SK-N-SH (cell line): ENCODE measurements at regions of chr1 and their contacts with region 1.

Region 1: DNA sequence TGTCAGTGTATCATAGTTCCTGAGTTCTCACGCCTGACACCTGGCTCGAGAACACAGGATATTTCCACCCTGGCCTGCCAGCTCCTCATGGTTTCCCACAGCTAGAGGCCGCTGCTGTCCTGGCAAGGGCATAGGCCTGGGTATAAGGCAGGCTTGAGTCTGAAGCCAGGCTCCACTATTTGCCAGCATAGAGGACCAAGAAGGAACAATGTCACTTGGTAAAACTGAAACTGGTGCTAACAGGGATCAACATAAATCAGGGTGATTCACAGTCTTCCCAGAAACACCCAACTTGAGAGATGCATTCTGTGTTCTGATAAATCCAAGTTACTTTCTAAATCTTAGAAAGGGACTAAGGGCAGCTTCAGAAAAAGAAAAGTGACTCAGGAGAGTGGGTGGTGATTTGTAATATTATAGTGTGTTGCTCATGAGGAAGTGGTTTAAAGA is 6.9 kb upstream of the S100A2 start:
- DNase-seq: peak; percentile 78
- H3K4me3 ChIP-seq: no peak overlapping the region
- H3K27ac ChIP-seq: peak overlapping the region; percentile 4 to 77; a peak in 3 of 4 replicates
- H3K4me1 ChIP-seq: peaks cover 12 to 15% of the 10 kb centered on the region in 2 experiments
- H3K27me3 ChIP-seq: no peaks in the 10 kb centered on the region
- CTCF ChIP-seq: peak; percentile 96
- EP300 ChIP-seq: no peak
- RAD21 ChIP-seq: peak; percentile 91

Region 2: DNA sequence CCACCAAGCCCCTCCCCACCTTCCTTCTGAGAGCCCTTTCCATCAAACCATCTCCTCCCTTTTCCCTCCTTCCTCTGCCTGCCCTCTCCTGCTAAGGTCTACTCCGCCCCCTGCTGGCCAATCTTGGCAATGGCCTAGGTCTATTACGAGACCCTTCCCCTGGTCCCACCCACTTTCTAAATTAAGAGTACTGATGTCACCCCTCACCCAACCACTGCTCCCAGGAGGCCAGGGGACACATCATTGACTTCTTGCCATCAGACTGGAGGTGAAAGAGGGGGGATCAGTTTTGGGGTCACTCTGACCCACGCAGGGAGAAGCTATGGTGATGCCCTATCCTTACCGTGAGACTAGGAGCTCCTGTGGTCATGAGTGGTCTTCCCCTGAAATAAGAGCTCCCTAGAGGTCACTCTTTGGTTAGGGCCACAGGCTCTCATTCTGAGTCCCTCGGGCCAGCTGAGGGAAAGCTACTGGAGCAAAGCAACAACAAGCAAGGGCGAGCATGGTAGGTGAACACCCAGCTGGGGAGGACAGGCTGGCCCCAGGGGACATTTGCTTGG is 77.5 kb before region 1 on chr1:
- CTCF ChIA-PET with region 1: interaction called, 34 read pairs
- POLR2A ChIA-PET with region 1: no interaction called
- DNase-seq: peak; percentile 79
- H3K4me3 ChIP-seq: no peak overlapping the region; a peak in 1 of 4 replicates
- H3K27ac ChIP-seq: no peak overlapping the region
- H3K4me1 ChIP-seq: peaks cover 0 to 5% of the 10 kb centered on the region in 2 experiments; a peak in 1 of 4 replicates
- H3K27me3 ChIP-seq: peaks cover 10% of the 10 kb centered on the region; the same call in 1 of the 2 replicates
- CTCF ChIP-seq: peak; percentile 96
- EP300 ChIP-seq: no peak
- RAD21 ChIP-seq: peak; percentile 88

Region 3: DNA sequence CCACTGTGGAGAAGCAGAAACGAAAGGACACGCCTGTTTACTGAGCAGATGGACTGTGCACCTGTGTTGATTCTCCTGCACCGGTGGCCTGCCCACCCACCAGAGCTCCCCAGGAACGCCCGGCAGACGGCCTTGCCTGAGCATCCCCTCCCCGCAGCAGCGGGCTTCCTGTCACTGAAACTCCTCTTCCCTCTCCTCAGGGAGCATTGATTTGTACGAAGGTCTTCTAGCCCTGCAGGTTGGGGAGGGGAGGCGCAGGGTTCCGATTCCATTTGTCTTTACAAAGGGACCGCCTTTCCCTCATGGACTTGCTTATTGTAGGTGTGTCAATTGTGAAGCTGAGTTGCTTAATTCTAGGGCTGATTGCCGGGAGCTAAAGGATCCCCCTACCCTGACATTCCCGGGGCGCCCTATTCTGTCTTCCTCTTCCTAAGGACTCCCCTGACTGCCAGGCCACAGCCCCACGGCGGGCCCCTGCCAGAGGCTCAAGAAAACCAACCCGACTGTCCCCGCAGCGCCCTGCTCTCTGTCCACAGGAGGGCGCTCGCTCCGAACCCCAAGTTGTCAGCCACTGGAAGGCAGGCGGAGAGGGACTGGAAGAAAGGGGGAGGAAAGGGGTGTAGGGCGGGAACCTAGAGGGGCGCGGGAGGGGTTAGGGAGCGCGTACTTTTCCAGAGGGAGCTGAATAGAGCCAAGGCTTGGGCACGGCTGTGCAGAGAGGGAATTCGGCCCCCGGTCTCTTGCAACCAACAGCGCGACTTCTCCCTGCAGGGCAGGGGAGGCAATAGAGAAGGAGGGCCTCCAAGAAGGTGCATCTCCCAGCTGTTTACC is 39.6 kb before region 1 on chr1:
- CTCF ChIA-PET with region 1: interaction called, 24 read pairs
- POLR2A ChIA-PET with region 1: no interaction called
- DNase-seq: no peak
- H3K4me3 ChIP-seq: peak overlapping the region in 1 of 2 experiments; percentile 79; a peak in 3 of 4 replicates
- H3K27ac ChIP-seq: peak overlapping the region; percentile 1 to 87; a peak in 3 of 4 replicates
- H3K4me1 ChIP-seq: peaks cover 24 to 31% of the 10 kb centered on the region in 2 experiments; a peak in 3 of 4 replicates
- H3K27me3 ChIP-seq: no peaks in the 10 kb centered on the region
- CTCF ChIP-seq: peak; percentile 62
- EP300 ChIP-seq: no peak
- RAD21 ChIP-seq: 0 out of 2 replicates have a peak, but pooled peaks have one; percentile 9

Region 4: DNA sequence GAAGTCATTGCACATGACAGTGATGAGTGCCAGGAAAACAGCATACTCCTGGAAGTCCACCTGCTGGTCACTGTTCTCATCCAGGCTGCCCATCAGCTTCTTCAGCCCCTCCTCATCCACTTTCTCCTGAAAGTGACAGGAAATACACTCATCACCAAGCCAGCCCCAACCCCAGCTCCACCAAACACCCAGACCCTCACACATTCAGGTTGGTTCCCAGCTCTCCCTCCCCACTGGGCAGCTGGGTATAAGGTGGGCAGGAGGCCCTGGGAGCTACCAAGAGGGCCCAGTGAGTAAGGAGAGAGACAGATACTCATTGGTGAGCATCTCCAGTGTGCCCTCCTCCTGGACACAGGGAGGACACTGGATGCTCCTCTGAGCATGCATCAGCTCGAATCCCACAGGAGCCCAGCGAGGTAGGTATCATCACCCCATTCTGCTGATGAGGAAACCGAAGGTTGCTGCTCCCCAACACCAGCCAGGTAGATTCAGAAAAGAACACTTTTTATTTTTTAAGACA is 11.1 kb before region 1 on chr1:
- CTCF ChIA-PET with region 1: interaction called, 26 read pairs
- POLR2A ChIA-PET with region 1: no interaction called
- DNase-seq: no peak
- H3K4me3 ChIP-seq: no peak overlapping the region
- H3K27ac ChIP-seq: no peak overlapping the region
- H3K4me1 ChIP-seq: peaks cover 15 to 27% of the 10 kb centered on the region in 2 experiments
- H3K27me3 ChIP-seq: no peaks in the 10 kb centered on the region
- CTCF ChIP-seq: no peak
- EP300 ChIP-seq: no peak
- RAD21 ChIP-seq: no peak

Region 5: GRCh38 chr1:153617675-153618074 is 45.1 kb after region 1 on chr1:
- CTCF ChIA-PET with region 1: interaction called, 100 read pairs
- POLR2A ChIA-PET with region 1: no interaction called
- DNase-seq: peak; percentile 82
- H3K4me3 ChIP-seq: no peak overlapping the region
- H3K27ac ChIP-seq: no peak overlapping the region
- H3K4me1 ChIP-seq: peaks cover 0 to 4% of the 10 kb centered on the region in 2 experiments; a peak in 1 of 4 replicates
- H3K27me3 ChIP-seq: no peaks in the 10 kb centered on the region
- CTCF ChIP-seq: peak; percentile 81
- EP300 ChIP-seq: no peak
- RAD21 ChIP-seq: peak; percentile 64

Region 6: DNA sequence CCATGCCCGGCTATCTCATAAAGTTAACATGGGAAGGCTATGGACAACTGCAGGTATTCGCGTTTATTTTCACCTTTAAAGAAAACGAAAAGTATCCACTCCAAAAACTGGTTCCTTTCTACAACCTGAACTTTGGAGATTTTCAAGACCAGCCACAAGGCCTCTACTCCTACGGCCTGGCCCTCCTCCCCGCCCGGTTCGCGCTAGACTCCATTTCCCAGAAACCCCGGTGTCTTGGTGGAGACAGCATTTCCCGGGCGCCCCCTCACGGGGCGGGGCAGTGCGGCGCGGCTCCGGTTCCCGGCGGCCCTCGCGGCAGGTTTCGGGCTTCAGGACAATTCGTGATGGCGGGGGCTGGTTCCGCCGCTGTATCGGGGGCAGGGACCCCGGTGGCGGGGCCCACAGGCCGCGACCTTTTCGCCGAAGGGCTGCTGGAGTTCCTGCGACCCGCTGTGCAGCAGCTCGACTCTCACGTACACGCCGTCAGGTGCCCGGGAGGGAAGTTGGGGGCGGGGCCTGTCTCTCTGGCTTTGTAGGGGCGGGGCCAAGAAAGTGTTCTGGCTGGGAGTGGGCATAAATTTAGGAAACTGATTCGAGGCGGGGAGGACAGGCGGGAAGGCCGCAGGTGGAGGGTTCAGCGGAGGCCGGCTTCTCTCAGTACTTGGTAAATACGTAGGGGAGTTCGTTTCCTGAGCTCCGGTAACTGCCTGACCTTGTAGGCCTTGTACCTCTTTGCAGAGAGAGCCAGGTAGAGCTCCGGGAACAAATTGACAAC is 86.0 kb after region 1 on chr1 and contains the start of gene SNAPIN:
- CTCF ChIA-PET with region 1: no interaction called
- POLR2A ChIA-PET with region 1: no interaction called
- DNase-seq: peak; percentile 94
- H3K4me3 ChIP-seq: peak within 1 kb of the TSS; percentile 60 to 92
- H3K27ac ChIP-seq: peak within 1 kb of the TSS; percentile 58 to 83; a peak in 3 of 4 replicates
- H3K4me1 ChIP-seq: peaks cover 0 to 5% of the 10 kb centered on the region in 2 experiments; a peak in 1 of 4 replicates
- H3K27me3 ChIP-seq: no peaks in the 10 kb centered on the region
- CTCF ChIP-seq: 0 out of 2 replicates have a peak, but pooled peaks have one; percentile 12
- EP300 ChIP-seq: no peak
- RAD21 ChIP-seq: no peak
- polyA plus RNA-seq, gene SNAPIN: 57.6 and 61.7 TPM in 2 replicates

Region 7: DNA sequence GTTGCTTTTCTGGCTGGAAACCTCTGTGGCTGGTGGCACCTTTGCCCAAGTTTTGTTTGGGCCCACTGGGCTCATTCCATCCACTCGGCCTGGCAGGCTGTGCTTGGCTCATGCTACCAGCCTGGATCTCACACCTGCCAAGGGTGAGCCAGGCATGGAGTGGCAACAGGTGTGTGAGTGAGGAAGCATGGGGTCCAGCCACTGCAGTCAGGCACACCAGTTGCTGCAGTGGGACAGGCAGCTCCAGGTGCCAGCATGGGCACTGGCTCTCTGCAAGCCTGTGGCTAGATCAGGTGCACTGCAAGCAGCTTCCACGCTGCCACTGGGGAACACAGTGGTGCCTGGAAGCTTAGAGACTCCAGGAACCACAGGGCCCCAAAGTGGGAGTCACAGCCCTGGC is 525.3 kb after region 1 on chr1:
- CTCF ChIA-PET with region 1: no interaction called
- POLR2A ChIA-PET with region 1: no interaction called
- DNase-seq: no peak
- H3K4me3 ChIP-seq: no peak overlapping the region
- H3K27ac ChIP-seq: no peak overlapping the region
- H3K4me1 ChIP-seq: no peaks in the 10 kb centered on the region
- H3K27me3 ChIP-seq: peaks cover 6% of the 10 kb centered on the region; the same call in 1 of the 2 replicates
- CTCF ChIP-seq: no peak
- EP300 ChIP-seq: no peak
- RAD21 ChIP-seq: no peak